ENCODE measurements at regions of chrX and their contacts with region 1.

Region 1: DNA sequence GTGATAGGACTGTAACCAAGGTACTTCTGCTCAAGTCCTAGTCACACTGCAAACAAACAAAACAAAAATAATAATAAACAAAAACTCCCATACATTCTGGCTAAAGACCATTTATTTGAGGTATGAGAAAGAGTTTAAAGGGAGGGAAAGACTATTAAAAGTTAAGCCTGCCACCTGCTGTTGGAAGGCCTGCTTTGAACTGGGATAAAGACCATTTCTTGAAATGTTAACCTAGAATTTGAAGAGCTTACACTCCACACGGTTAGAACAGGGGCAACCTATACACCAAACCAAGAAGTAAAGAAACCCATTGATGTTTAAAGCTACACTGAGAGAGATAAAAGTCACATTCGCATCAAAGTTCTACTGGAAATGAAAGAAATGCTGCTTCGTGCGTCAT is 548.7 kb upstream of the DIPK2B start:
- DNase-seq: peak in 1 of 35 experiments; percentile 41
- ATAC-seq: peak in 1 of 4 experiments; percentile 70
- H3K4me3 ChIP-seq: no peak overlapping the region
- H3K4me3 Mint-ChIP-seq: no peak overlapping the region
- H3K27ac ChIP-seq: no peak overlapping the region
- H3K27ac Mint-ChIP-seq: peak overlapping the region in 1 of 2 donors; percentile 59
- H3K4me1 ChIP-seq: peaks cover 10 to 15% of the 10 kb centered on the region in 2 experiments
- H3K4me1 Mint-ChIP-seq: peaks cover 0 to 27% (median 9%) of the 10 kb centered on the region in 3 donors
- H3K27me3 ChIP-seq: no peaks in the 10 kb centered on the region
- H3K27me3 Mint-ChIP-seq: peaks cover 0 to 3% of the 10 kb centered on the region in 2 donors

Region 2: DNA sequence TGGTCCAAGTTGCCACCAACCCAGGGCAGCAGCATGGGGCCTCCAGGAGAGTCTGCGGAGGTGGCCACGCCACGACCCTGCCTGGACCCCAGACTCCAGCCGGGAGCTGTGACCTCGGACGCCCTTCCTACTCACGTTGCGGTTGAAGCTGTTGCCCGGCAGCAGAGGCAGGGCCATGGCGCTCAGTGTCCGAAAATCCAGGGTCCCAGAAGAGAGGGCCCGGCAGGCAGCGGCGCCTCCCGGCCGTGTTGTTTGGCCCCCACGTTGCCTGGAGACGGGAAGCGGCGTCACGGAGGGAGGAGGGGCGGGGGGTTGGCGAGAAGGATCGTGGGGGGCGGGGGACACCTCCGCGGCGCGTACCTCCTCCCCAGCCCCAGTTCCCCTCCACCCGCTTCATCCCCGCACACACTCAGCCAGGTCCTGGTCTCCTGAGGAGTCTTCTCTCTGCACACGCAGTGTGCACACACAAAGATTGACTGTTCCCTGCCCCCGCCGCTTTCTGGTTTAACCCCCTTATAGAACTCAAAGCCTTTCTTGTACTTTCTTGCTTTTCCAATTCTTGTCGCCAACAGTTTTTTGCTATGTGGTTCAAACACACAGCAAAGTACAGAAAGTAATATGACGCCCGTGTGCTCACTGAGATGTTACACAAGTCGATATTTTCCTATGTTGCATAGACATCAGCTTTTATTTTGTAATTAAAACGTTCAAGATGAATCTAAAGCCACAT is 1405.8 kb before region 1 on chrX and contains the start of gene EFHC2:
- CTCF ChIA-PET with region 1: no interaction called
- POLR2A ChIA-PET with region 1: interaction called in 1 of 2 experiments, 14 read pairs
- DNase-seq: peak; percentile 19 to 75 (median 54)
- ATAC-seq: peak; percentile 54 to 72 (median 59)
- H3K4me3 ChIP-seq: peak within 1 kb of the TSS; percentile 51 to 64
- H3K4me3 Mint-ChIP-seq: peak within 1 kb of the TSS; percentile 84 to 89 (median 89)
- H3K27ac ChIP-seq: peak within 1 kb of the TSS; percentile 83
- H3K27ac Mint-ChIP-seq: peak within 1 kb of the TSS; percentile 95 to 97
- H3K4me1 ChIP-seq: peaks cover 2 to 15% of the 10 kb centered on the region in 2 experiments
- H3K4me1 Mint-ChIP-seq: peaks cover 20 to 33% (median 32%) of the 10 kb centered on the region in 3 donors
- H3K27me3 ChIP-seq: no peaks in the 10 kb centered on the region
- H3K27me3 Mint-ChIP-seq: no peaks in the 10 kb centered on the region
- total RNA-seq, gene EFHC2: 1.1 to 3.5 (median 2.0) TPM

Region 3: DNA sequence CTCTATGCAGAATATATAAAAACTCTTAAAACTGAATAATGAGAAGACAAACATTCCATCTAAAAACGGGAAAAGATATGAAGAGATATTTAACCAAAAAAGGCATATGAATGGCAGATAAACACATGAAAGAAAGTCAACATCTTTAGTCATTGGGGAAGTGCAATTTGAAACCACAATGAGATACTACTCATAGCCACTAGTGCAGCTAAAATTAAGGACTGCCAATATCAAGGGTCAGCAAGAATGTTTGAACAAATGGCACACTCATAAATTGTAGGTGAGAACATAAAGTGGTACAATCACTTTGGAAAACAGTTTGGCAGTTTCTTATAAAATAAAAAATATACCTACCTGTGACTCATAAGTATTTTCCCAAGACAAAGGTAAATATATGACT is 13.8 kb before region 1 on chrX:
- CTCF ChIA-PET with region 1: no interaction called
- POLR2A ChIA-PET with region 1: no interaction called
- DNase-seq: no peak
- ATAC-seq: no peak
- H3K4me3 ChIP-seq: no peak overlapping the region
- H3K4me3 Mint-ChIP-seq: no peak overlapping the region
- H3K27ac ChIP-seq: no peak overlapping the region
- H3K27ac Mint-ChIP-seq: no peak overlapping the region
- H3K4me1 ChIP-seq: no peaks in the 10 kb centered on the region
- H3K4me1 Mint-ChIP-seq: no peaks in the 10 kb centered on the region
- H3K27me3 ChIP-seq: no peaks in the 10 kb centered on the region
- H3K27me3 Mint-ChIP-seq: peaks cover 0 to 8% of the 10 kb centered on the region in 2 donors

Measured in T-cell (primary cell).